GM10248 (cell line): ENCODE measurements at regions of chr16 and their contacts with region 1.

Region 1: GRCh38 chr16:48623304-48624016 is 13.5 kb upstream of the N4BP1 start:
- DNase-seq: peak; percentile 91
- CTCF ChIP-seq: peak; percentile 98

Region 2: GRCh38 chr16:48231727-48232492 is 391.6 kb before region 1 on chr16:
- CTCF ChIA-PET with region 1: interaction called, 73 read pairs
- POLR2A ChIA-PET with region 1: no interaction called
- DNase-seq: peak; percentile 65
- CTCF ChIP-seq: peak; percentile 68

Region 3: DNA sequence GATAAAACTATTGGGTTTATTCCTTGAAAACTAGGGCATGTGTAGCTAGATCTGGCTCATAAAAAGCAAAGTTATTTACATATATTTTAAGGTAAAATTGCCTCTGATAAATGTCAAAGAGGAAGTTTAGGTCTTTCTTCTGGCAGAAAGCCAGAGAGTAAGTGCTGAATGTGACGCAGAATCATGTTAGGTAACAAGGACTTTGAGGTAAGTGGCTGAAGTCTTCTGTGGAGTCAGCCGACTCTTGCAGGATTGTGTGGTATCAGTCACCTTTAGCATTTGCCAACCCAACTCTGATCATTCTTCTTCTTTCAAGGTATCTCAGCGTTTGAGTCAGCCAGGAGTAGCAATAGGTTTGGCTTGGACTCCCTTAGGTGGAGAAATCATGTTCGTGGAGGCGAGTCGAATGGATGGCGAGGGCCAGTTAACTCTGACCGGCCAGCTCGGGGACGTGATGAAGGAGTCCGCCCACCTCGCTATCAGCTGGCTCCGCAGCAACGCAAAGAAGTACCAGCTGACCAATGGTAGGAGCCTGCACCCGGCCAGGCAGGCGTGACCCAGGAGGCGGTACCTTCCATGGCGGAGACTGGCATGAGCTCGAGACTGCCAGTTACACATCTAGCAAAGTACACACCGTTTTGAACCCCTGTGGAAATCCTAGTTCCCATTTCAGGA is 276.1 kb before region 1 on chr16:
- CTCF ChIA-PET with region 1: interaction called, 95 read pairs
- POLR2A ChIA-PET with region 1: no interaction called
- DNase-seq: no peak
- CTCF ChIP-seq: no peak

Region 4: DNA sequence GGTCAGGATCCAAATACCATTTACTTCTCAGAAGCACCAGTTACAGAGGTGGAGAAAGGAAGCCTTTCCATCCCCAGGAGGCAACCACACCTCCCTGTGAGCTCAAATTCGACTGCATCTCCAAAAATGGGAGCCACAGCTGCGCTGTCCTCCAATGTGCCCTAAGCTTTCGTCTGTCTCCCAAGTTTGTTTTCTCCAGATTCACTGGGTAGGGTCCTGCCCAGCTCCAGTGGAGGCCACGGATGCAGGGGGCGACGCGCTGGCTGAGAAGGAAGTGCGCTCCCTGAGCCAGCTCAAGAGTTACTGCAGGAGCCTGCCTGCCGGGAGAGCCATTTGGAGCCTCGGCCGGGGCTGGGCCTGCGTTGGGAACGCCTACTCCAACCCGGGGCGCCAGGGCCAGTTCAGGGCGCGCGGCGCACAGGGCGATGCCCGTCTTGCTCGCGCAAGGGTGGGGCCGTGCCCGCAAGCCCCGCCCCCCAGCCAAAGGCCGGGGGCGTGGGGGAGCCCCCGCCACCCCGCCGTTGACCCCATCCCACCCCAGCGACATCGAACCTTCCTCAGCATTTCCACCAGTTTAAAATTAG is 257.8 kb before region 1 on chr16:
- CTCF ChIA-PET with region 1: interaction called, 23 read pairs
- POLR2A ChIA-PET with region 1: interaction called, 3 read pairs
- DNase-seq: peak; percentile 86
- CTCF ChIP-seq: no peak

Region 5: GRCh38 chr16:48498769-48499631 is 124.5 kb before region 1 on chr16:
- CTCF ChIA-PET with region 1: no interaction called
- POLR2A ChIA-PET with region 1: no interaction called
- DNase-seq: no peak
- CTCF ChIP-seq: no peak

Region 6: GRCh38 chr16:48526058-48526957 is 97.2 kb before region 1 on chr16:
- CTCF ChIA-PET with region 1: interaction called, 13 read pairs
- POLR2A ChIA-PET with region 1: no interaction called
- DNase-seq: peak; percentile 73
- CTCF ChIP-seq: peak; percentile 62

Region 7: GRCh38 chr16:48542020-48542473 is 81.4 kb before region 1 on chr16:
- CTCF ChIA-PET with region 1: interaction called, 22 read pairs
- POLR2A ChIA-PET with region 1: no interaction called
- DNase-seq: no peak
- CTCF ChIP-seq: peak; percentile 33

Region 8: DNA sequence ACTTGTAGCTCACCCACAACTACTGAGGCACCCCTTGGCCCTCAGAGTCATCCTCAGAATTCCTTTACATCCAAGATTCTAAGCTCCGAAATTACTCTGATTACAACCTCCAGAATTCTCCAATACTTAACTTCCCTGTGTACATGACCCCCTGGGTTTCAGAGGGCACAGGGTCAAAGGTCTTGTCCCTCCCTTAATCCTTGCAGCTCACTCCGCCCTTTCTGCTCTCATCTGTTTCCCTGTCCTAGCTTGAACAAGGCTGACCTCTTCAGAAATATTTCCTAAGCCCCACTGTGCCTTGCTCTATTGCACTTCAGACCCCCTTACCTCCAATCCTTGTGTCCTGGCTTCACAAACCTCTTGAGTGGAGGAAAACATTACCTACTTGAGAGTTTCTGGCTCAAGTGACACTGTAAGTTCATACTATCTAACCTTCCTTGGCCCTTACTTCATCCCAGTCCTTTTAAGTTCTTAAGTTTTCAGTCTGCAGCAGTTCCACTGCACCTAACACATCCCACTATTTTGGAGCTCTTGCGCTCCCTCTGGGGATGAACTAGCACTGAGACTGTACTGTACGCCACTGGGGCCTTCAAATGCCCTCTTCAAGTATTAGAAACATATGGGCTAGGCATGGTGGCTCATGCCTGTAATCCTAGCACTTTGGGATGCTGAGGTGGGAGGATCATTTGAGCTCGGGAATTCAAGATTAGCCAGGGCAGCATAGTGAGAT is 19.6 kb before region 1 on chr16:
- CTCF ChIA-PET with region 1: interaction called, 13 read pairs
- POLR2A ChIA-PET with region 1: no interaction called
- DNase-seq: no peak
- CTCF ChIP-seq: no peak